Activated naive CD4-positive, alpha-beta T cell treated with anti-CD3 and anti-CD28 coated beads for 36 hours (primary cell): ENCODE measurements at regions of chr22 and their contacts with region 1.

Region 1: DNA sequence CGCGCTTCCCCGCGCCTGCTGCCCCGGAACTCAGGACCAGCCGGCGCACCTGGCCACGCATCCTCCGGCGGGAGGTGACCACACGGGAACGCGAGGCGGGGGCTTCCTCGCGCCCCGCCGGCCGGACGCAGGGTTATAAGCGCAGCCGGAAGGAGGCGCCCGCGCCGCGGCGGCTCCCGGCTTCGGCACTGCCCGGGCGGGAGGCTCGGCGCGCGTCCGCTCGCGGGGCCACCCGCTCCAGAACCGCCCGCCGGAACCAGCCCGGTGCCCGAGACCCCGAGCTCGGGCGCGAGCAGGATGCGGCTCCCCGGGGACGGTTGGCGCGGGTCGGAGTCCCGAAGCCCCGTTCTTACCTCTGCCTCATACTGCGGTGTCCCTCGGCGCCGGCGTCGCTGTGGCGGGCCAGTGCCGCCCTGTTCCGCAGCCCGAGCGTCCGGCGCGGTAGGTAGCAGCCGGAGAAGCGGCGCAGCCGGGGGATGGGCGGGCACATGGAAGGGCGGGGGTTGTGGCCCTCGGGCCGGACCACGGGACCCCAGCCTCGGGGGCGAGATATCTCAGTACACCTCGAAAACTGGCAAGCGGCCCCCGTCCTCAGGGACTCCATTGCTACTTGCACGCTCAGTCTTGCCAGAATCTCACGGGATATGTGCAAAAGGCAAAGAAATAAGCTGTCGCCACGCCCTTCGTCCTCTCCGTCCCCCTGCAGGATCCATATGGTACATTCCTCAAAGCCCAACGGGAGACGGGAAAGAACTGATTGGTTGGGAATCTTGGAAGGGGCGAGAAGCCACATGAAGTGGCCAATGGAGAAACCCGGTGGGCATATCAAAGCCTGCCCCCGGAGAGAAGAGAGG is 23.1 kb downstream of the MICAL3 start:
- DNase-seq: peak; percentile 77
- H3K4me3 Mint-ChIP-seq: peak overlapping the region; percentile 91
- H3K27ac Mint-ChIP-seq: peak overlapping the region; percentile 93
- H3K4me1 Mint-ChIP-seq: peaks cover 43% of the 10 kb centered on the region
- H3K27me3 Mint-ChIP-seq: peaks cover 5% of the 10 kb centered on the region

Region 2: DNA sequence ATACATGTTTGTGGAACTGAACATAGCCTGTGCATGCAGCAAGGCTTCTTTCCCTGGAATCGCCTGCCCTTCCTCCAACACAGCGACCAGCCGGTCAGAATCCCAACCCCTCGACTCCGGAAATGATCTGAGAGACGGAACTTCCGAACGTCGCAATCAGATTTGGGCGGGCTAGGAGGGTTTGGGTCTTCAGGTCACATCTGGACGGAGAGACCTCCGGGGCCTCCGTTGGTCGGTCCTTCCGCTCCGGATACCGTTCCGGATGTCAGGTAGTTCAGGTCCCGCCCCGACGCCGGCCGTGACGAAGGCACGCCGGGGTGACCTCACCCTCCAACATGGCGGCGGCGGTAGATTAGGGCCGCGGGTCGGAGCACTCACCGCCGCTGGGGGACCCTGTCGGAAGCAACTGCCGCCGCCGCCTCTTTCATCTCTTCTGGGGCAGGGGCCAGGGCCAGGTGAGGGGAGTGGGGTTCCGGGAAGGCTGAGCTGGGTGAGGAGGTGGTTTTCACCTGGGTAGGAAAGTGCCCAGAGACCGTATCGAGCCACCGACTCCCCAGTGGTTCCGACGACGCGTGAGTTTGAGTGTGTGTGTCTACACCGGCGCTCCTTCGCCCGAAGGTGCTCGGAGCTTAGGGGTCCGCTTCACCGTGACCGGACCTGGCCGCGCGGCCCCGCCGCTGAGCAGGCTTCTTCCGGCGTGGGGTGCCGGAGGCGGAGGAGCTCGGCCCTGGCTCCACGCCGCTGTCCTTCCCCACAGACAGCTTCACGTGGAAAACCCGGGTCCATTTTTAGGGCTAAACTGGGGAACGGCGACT is 362.6 kb before region 1 on chr22 and contains the start of gene BCL2L13:
- CTCF ChIA-PET with region 1: no interaction called
- intact Hi-C with region 1: loop called (anchors 5 kb)
- DNase-seq: peak; percentile 94
- H3K4me3 Mint-ChIP-seq: peak within 1 kb of the TSS; percentile 85
- H3K27ac Mint-ChIP-seq: peak within 1 kb of the TSS; percentile 89
- H3K4me1 Mint-ChIP-seq: peaks cover 22% of the 10 kb centered on the region
- H3K27me3 Mint-ChIP-seq: no peaks in the 10 kb centered on the region
- total RNA-seq, gene BCL2L13: 32.2 to 32.6 TPM

Region 3: GRCh38 chr22:18024276-18024947 is 23.1 kb after region 1 on chr22 and contains the start of gene MICAL3:
- CTCF ChIA-PET with region 1: interaction called, 10 read pairs
- intact Hi-C with region 1: no loop called
- DNase-seq: peak; percentile 63
- H3K4me3 Mint-ChIP-seq: peak within 1 kb of the TSS; percentile 84
- H3K27ac Mint-ChIP-seq: no peak within 1 kb of the TSS
- H3K4me1 Mint-ChIP-seq: peaks cover 10% of the 10 kb centered on the region
- H3K27me3 Mint-ChIP-seq: peaks cover 27% of the 10 kb centered on the region
- total RNA-seq, gene MICAL3: 21.0 to 25.8 TPM